CD4-positive, alpha-beta memory T cell (primary cell): ENCODE measurements at regions of chr9 and their contacts with region 1.

Region 1: GRCh38 chr9:133417541-133418461 is at the start of gene REXO4:
- DNase-seq: peak; percentile 83 to 87 (median 84)
- H3K4me3 ChIP-seq: peak within 1 kb of the TSS; percentile 80 to 93
- H3K4me3 Mint-ChIP-seq: peak within 1 kb of the TSS; percentile 88 to 93 (median 92)
- H3K27ac ChIP-seq: peak within 1 kb of the TSS; percentile 76
- H3K27ac Mint-ChIP-seq: peak within 1 kb of the TSS; percentile 86 to 95 (median 92)
- H3K4me1 ChIP-seq: peaks cover 24% of the 10 kb centered on the region
- H3K4me1 Mint-ChIP-seq: peaks cover 28 to 76% (median 53%) of the 10 kb centered on the region in 4 donors
- H3K27me3 ChIP-seq: no peaks in the 10 kb centered on the region
- H3K27me3 Mint-ChIP-seq: no peaks in the 10 kb centered on the region
- total RNA-seq, gene REXO4: 38.7 to 39.0 TPM

Region 2: GRCh38 chr9:133335878-133336811 is 81.7 kb before region 1 on chr9 and contains the start of gene SURF6:
- CTCF ChIA-PET with region 1: interaction called, 3 read pairs
- POLR2A ChIA-PET with region 1: no interaction called
- intact Hi-C with region 1: loop called (anchors 1 kb)
- DNase-seq: peak; percentile 93 to 94 (median 94)
- H3K4me3 ChIP-seq: peak within 1 kb of the TSS; percentile 50 to 69
- H3K4me3 Mint-ChIP-seq: peak within 1 kb of the TSS; percentile 92 to 97 (median 96)
- H3K27ac ChIP-seq: peak within 1 kb of the TSS; percentile 64
- H3K27ac Mint-ChIP-seq: peak within 1 kb of the TSS; percentile 86 to 96 (median 93)
- H3K4me1 ChIP-seq: peaks cover 41% of the 10 kb centered on the region
- H3K4me1 Mint-ChIP-seq: peaks cover 16 to 64% (median 28%) of the 10 kb centered on the region in 4 donors
- H3K27me3 ChIP-seq: no peaks in the 10 kb centered on the region
- H3K27me3 Mint-ChIP-seq: no peaks in the 10 kb centered on the region
- total RNA-seq, gene SURF6: 28.6 to 28.9 TPM

Region 3: GRCh38 chr9:133356391-133357091 is 61.3 kb before region 1 on chr9 and contains the starts of genes SURF1 and SURF2:
- CTCF ChIA-PET with region 1: no interaction called
- POLR2A ChIA-PET with region 1: interaction called, 12 read pairs
- intact Hi-C with region 1: no loop called
- DNase-seq: peak; percentile 85 to 90 (median 88)
- H3K4me3 ChIP-seq: peak within 1 kb of the TSS; percentile 61 to 73
- H3K4me3 Mint-ChIP-seq: peak within 1 kb of the TSS; percentile 85 to 92 (median 88)
- H3K27ac ChIP-seq: peak within 1 kb of the TSS; percentile 76
- H3K27ac Mint-ChIP-seq: peak within 1 kb of the TSS; percentile 89 to 93 (median 92)
- H3K4me1 ChIP-seq: peaks cover 33% of the 10 kb centered on the region
- H3K4me1 Mint-ChIP-seq: peaks cover 15 to 44% (median 27%) of the 10 kb centered on the region in 4 donors
- H3K27me3 ChIP-seq: no peaks in the 10 kb centered on the region
- H3K27me3 Mint-ChIP-seq: no peaks in the 10 kb centered on the region
- total RNA-seq, gene SURF1: 54.3 to 61.1 TPM
- total RNA-seq, gene SURF2: 19.5 to 19.8 TPM

Region 4: GRCh38 chr9:133429641-133430161 is 11.9 kb after region 1 on chr9:
- CTCF ChIA-PET with region 1: no interaction called
- POLR2A ChIA-PET with region 1: no interaction called
- intact Hi-C with region 1: no loop called
- DNase-seq: peak in 1 of 5 donors; percentile 35
- H3K4me3 ChIP-seq: no peak overlapping the region
- H3K4me3 Mint-ChIP-seq: peak overlapping the region in 4 of 8 donors; percentile 3 to 62 (median 16)
- H3K27ac ChIP-seq: no peak overlapping the region
- H3K27ac Mint-ChIP-seq: no peak overlapping the region
- H3K4me1 ChIP-seq: no peaks in the 10 kb centered on the region
- H3K4me1 Mint-ChIP-seq: peaks cover 3 to 8% (median 4%) of the 10 kb centered on the region in 4 donors
- H3K27me3 ChIP-seq: peaks cover 6% of the 10 kb centered on the region
- H3K27me3 Mint-ChIP-seq: peaks cover 13 to 17% of the 10 kb centered on the region in 2 donors

Region 5: DNA sequence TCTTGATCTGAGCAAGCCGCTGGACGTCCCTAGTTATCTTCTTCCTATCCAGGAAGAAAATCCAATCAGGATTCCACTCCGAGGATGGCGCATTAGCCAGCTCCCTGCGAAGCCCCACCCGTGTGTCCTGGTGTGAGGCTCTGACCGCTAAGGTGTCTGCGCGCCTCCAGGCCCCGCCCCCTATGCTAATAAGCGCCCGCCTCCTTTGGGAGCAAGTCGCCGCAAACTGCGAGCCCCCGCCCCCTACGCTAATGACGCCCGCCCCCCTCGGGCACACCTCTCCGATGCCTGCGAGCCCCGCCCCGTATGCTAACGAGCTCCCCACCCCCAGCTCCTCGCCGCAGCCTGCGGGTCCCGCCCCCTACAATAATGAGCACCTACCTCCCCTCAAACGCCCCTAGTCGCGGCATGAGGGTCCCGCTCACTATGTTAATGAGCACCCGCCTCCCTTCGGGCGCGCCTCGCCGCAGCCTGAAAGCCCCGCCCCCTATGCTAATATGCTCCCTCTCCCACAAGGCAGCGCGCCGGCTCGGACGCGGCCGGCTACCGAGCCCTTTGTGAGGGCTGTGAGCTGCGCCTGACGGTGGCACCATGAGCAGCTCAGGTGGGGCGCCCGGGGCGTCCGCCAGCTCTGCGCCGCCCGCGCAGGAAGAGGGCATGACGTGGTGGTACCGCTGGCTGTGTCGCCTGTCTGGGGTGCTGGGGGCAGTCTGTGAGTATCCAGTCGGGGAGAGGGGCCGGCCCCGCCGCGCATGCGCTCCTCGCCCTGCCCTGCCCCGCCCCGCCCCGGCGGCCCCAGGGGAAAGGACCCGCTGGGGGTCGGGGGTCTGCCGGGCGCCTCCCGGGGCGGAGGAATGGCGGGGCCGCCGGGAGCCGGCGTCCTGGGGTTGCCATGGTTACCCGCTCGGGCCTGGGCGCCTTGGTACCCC is 41.9 kb after region 1 on chr9 and contains the start of gene CACFD1:
- CTCF ChIA-PET with region 1: no interaction called
- POLR2A ChIA-PET with region 1: interaction called, 5 read pairs
- intact Hi-C with region 1: loop called (anchors 1 kb)
- DNase-seq: peak; percentile 87 to 95 (median 88)
- H3K4me3 ChIP-seq: peak within 1 kb of the TSS; percentile 36 to 87
- H3K4me3 Mint-ChIP-seq: peak within 1 kb of the TSS; percentile 88 to 96 (median 92)
- H3K27ac ChIP-seq: peak within 1 kb of the TSS; percentile 78
- H3K27ac Mint-ChIP-seq: peak within 1 kb of the TSS; percentile 93 to 97 (median 95)
- H3K4me1 ChIP-seq: peaks cover 10% of the 10 kb centered on the region
- H3K4me1 Mint-ChIP-seq: peaks cover 2 to 21% (median 6%) of the 10 kb centered on the region in 4 donors
- H3K27me3 ChIP-seq: no peaks in the 10 kb centered on the region
- H3K27me3 Mint-ChIP-seq: no peaks in the 10 kb centered on the region
- total RNA-seq, gene CACFD1: 2.5 to 2.6 TPM

Region 6: DNA sequence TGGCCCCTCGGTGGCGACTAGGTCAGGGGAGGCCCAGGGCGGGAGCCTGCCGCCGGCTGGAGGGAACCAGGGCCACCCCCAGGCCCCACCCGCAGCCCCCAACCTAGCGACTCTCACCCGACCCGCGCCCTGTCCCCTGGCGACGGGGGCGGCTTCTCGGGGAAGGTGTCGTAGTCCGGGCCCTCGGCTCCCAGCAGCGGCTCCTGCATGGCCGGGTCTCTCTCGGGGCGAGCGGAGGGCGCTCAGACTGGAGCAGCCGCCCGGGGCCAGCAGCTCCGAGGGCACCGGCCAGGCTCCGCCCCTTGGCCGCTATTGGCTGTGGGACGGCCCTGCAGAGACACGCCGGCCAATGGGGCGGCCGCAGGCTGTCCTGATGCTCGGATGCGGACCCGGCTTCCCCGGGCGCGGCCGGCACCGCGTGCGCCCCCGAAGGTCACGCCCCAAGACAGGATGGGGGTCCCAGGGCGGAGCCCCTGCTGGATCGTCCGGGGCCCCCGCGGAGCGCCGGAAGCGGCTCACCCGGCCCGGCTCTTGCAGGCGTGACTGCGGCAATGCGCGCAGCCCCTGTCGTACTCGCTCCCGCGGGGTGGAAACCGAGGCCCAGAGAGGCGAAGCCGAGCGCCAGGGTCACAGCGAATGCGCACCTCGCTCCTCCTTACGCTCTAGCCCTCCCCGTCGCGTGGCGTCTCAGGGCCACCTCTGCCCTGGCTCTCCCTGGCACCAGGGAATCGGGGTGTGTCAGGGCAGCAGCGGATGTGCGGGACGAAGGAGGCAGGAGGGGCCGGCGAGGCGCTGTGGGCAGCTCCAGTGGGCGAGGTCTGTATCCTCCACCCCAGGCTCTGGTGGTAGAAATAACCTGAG is 61.3 kb after region 1 on chr9 and contains the start of gene SLC2A6:
- CTCF ChIA-PET with region 1: no interaction called
- POLR2A ChIA-PET with region 1: interaction called, 5 read pairs
- intact Hi-C with region 1: loop called (anchors 2 kb)
- DNase-seq: peak; percentile 73 to 79 (median 77)
- H3K4me3 ChIP-seq: peak within 1 kb of the TSS; percentile 42 to 55
- H3K4me3 Mint-ChIP-seq: peak within 1 kb of the TSS; percentile 67 to 83 (median 76)
- H3K27ac ChIP-seq: peak within 1 kb of the TSS; percentile 34
- H3K27ac Mint-ChIP-seq: peak within 1 kb of the TSS in 5 of 7 donors; percentile 55 to 81 (median 65)
- H3K4me1 ChIP-seq: peaks cover 15% of the 10 kb centered on the region
- H3K4me1 Mint-ChIP-seq: peaks cover 5 to 10% (median 8%) of the 10 kb centered on the region in 4 donors
- H3K27me3 ChIP-seq: no peaks in the 10 kb centered on the region
- H3K27me3 Mint-ChIP-seq: peaks cover 0 to 2% of the 10 kb centered on the region in 2 donors
- total RNA-seq, gene SLC2A6: 1.6 to 2.5 TPM